GM12878 (cell line): ENCODE measurements at regions of chr6 and their contacts with region 1.

Region 1: GRCh38 chr6:18323935-18324705 is 59.8 kb upstream of the DEK start:
- DNase-seq: no peak
- ATAC-seq: peak; percentile 77
- H3K4me3 ChIP-seq: no peak overlapping the region
- H3K27ac ChIP-seq: no peak overlapping the region
- H3K4me1 ChIP-seq: peaks cover 15% of the 10 kb centered on the region; the same call in 1 of the 2 replicates
- H3K27me3 ChIP-seq: no peaks in the 10 kb centered on the region; a peak in 1 of 4 replicates
- CTCF ChIP-seq: peak; percentile 54 to 74 (median 69); a peak in 5 of 6 replicates
- EP300 ChIP-seq: no peak
- POLR2A ChIP-seq: no peak
- RAD21 ChIP-seq: peak; percentile 86

Region 2: GRCh38 chr6:17156112-17156921 is 1167.8 kb before region 1 on chr6:
- CTCF ChIA-PET with region 1: no interaction called
- POLR2A ChIA-PET with region 1: no interaction called
- RAD21 ChIA-PET with region 1: no interaction called
- SMC1A ChIA-PET with region 1: no interaction called
- in situ Hi-C with region 1: loop called (anchors 25 kb)
- intact Hi-C with region 1: no loop called
- DNase-seq: peak; percentile 20
- ATAC-seq: peak; percentile 79
- H3K4me3 ChIP-seq: no peak overlapping the region
- H3K27ac ChIP-seq: no peak overlapping the region
- H3K4me1 ChIP-seq: no peaks in the 10 kb centered on the region
- H3K27me3 ChIP-seq: no peaks in the 10 kb centered on the region
- CTCF ChIP-seq: peak; percentile 61 to 79 (median 66); a peak in 5 of 6 replicates
- EP300 ChIP-seq: no peak
- POLR2A ChIP-seq: no peak
- RAD21 ChIP-seq: peak; percentile 94

Region 3: GRCh38 chr6:18242062-18242851 is 81.9 kb before region 1 on chr6:
- CTCF ChIA-PET with region 1: no interaction called
- POLR2A ChIA-PET with region 1: no interaction called
- RAD21 ChIA-PET with region 1: no interaction called
- SMC1A ChIA-PET with region 1: no interaction called
- in situ Hi-C with region 1: no loop called
- intact Hi-C with region 1: no loop called
- DNase-seq: no peak
- ATAC-seq: no peak
- H3K4me3 ChIP-seq: no peak overlapping the region
- H3K27ac ChIP-seq: no peak overlapping the region; the same call in 1 of the 2 replicates
- H3K4me1 ChIP-seq: peaks cover 7% of the 10 kb centered on the region
- H3K27me3 ChIP-seq: no peaks in the 10 kb centered on the region
- CTCF ChIP-seq: no peak
- EP300 ChIP-seq: no peak
- POLR2A ChIP-seq: no peak
- RAD21 ChIP-seq: no peak

Region 4: DNA sequence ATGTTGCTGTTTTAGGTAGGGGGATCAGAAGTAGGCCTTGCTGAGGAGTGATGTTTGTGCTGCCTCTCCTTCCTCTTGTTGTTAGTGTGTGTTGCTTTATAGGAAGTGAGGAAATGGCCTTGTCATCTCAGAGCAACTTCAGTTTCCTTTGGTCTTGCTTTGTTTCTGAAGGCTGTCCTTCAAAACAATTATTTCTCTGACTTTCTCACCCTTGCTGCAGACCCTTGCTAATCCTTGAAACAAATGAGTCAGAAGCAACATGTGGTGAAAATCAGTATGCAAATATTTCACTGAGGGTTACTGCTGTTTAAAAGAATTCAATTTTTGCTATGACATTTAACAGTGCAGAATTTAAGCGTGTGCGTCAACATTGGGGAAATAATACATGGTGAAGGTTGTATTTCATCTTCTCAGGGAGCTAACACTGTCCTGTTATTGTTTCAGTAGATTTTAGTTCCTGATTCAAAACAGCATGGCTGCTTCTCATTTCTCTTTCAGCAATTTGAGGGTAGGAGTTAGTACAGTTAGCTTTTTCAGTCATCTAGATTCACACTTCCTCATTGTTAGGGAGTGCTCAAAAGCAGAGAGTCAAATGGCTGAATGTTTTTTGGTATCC is 76.8 kb after region 1 on chr6:
- CTCF ChIA-PET with region 1: interaction called, 6 read pairs
- POLR2A ChIA-PET with region 1: no interaction called
- RAD21 ChIA-PET with region 1: no interaction called
- SMC1A ChIA-PET with region 1: interaction called, 5 read pairs
- in situ Hi-C with region 1: no loop called
- intact Hi-C with region 1: loop called (anchors 5 kb)
- DNase-seq: peak; percentile 53
- ATAC-seq: peak; percentile 95
- H3K4me3 ChIP-seq: peak overlapping the region; percentile 13; the same call in 1 of the 2 replicates
- H3K27ac ChIP-seq: peak overlapping the region; percentile 68
- H3K4me1 ChIP-seq: peaks cover 10% of the 10 kb centered on the region
- H3K27me3 ChIP-seq: no peaks in the 10 kb centered on the region
- CTCF ChIP-seq: no peak
- EP300 ChIP-seq: peak in 1 of 2 experiments; percentile 58; a peak in 2 of 4 replicates
- POLR2A ChIP-seq: no peak
- RAD21 ChIP-seq: no peak

Region 5: DNA sequence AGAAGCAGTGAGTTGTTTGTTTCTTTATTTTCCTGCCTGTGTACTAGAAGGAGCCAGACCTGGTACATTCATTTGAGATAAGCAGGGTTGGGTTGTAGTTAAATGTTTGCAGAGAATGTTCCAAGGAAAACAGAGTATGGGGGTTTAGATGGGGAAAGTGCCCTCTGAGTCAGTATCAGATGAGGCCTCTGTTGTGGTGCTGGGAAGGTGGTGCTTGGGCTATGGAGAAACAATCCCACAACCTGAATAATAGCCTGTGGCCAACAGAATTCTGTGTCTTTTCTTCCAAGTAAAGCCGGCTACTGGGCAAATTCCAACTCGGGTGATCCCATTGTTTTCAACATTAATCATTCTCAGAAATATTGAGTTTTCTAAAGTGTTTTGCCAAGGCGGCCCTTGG is 172.3 kb after region 1 on chr6:
- CTCF ChIA-PET with region 1: interaction called, 126 read pairs
- POLR2A ChIA-PET with region 1: no interaction called
- RAD21 ChIA-PET with region 1: interaction called, 4 read pairs
- SMC1A ChIA-PET with region 1: interaction called, 101 read pairs
- in situ Hi-C with region 1: loop called (anchors 5 kb)
- intact Hi-C with region 1: no loop called
- DNase-seq: no peak
- ATAC-seq: no peak
- H3K4me3 ChIP-seq: no peak overlapping the region
- H3K27ac ChIP-seq: no peak overlapping the region
- H3K4me1 ChIP-seq: no peaks in the 10 kb centered on the region
- H3K27me3 ChIP-seq: no peaks in the 10 kb centered on the region
- CTCF ChIP-seq: no peak
- EP300 ChIP-seq: no peak
- POLR2A ChIP-seq: no peak
- RAD21 ChIP-seq: no peak

Region 6: DNA sequence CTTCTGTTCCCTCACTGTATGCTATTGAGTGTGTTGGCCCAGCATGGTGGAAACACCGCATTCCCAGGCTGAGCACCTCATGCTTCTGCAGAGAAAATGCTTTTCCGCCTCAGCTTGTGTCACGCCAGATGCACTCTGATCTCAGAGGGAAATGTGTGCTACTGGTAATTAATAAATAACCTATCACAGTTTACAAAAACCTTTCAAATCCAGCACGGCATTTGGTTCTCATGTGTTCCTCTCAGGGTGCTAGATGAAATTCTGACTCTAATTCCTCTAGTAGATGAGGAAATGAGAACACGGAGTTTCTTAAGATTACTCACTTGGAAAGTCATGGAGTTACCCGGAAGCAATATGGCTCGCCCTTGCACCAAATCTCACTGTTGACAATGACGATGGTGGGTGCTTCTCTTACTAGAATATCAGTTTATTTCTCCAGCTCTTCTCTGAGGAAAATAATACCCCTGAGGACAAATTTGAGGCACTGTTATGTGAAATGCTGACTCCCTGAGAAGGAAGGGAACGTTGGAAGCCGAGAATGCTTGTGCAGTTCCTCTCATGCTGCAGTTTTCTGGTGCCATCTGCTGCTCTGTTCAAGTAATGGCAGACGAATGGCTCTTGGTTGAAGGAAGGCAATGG is 179.6 kb after region 1 on chr6:
- CTCF ChIA-PET with region 1: interaction called, 126 read pairs
- POLR2A ChIA-PET with region 1: no interaction called
- RAD21 ChIA-PET with region 1: interaction called, 24 read pairs
- SMC1A ChIA-PET with region 1: interaction called, 101 read pairs
- in situ Hi-C with region 1: loop called (anchors 5 kb)
- intact Hi-C with region 1: loop called (anchors 1 kb)
- DNase-seq: peak; percentile 35
- ATAC-seq: peak; percentile 94
- H3K4me3 ChIP-seq: no peak overlapping the region
- H3K27ac ChIP-seq: no peak overlapping the region
- H3K4me1 ChIP-seq: no peaks in the 10 kb centered on the region
- H3K27me3 ChIP-seq: no peaks in the 10 kb centered on the region
- CTCF ChIP-seq: peak; percentile 87 to 96 (median 90); a peak in 5 of 6 replicates
- EP300 ChIP-seq: peak in 1 of 2 experiments; percentile 16; a peak in 1 of 4 replicates
- POLR2A ChIP-seq: no peak
- RAD21 ChIP-seq: peak; percentile 100

Region 7: GRCh38 chr6:19083809-19084208 is 759.7 kb after region 1 on chr6:
- CTCF ChIA-PET with region 1: no interaction called
- POLR2A ChIA-PET with region 1: no interaction called
- RAD21 ChIA-PET with region 1: no interaction called
- SMC1A ChIA-PET with region 1: no interaction called
- in situ Hi-C with region 1: no loop called
- intact Hi-C with region 1: no loop called
- DNase-seq: no peak
- ATAC-seq: no peak
- H3K4me3 ChIP-seq: no peak overlapping the region
- H3K27ac ChIP-seq: no peak overlapping the region
- H3K4me1 ChIP-seq: no peaks in the 10 kb centered on the region
- H3K27me3 ChIP-seq: no peaks in the 10 kb centered on the region
- CTCF ChIP-seq: no peak
- EP300 ChIP-seq: no peak
- POLR2A ChIP-seq: no peak
- RAD21 ChIP-seq: no peak